ENCODE measurements at regions of chr2 and their contacts with region 1.

Region 1: DNA sequence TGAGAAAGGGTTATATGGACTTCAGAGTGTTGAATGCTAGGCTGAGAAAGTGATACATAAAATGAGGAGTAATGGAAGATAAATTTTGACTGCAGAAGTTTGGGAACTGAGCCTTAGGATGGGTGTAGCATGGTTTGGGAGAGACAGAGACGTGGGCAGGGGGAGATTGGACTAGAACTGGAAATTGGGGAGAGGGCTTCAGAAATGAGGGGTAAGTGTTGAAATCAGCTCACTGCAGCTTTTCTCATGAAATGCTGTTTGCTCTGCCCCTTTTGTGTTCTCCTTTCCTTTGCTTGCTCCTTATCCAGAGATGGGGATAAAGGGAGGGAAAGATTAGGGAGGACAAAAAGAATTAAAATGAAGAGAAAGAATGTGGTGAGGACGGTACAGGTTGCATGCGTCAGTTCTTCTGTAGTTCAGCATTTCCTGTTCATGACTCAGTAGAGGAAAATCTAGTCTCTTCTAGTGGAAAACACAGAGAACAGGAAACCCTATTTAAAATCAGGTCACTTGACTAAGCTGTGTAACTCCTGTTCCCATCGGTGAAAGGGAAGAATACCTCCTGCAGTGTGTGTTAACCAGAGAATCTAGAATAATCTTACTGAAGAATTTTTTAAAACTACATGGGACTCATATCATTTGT is 105.6 kb downstream of the CRIM1 start:
- DNase-seq: no peak
- H3K4me3 ChIP-seq: peak overlapping the region in 1 of 4 experiments; percentile 17; a peak in 1 of 8 replicates
- H3K27ac ChIP-seq: peak overlapping the region; percentile 74
- H3K4me1 ChIP-seq: peaks cover 11 to 44% (median 34%) of the 10 kb centered on the region in 4 experiments
- H3K27me3 ChIP-seq: no peaks in the 10 kb centered on the region
- CTCF ChIP-seq: no peak
- EP300 ChIP-seq: 0 out of 3 replicates have a peak, but pooled peaks of 1 of the 2 experiments have one; percentile 27
- POLR2A ChIP-seq: peak in 1 of 2 experiments; percentile 54; a peak in 1 of 3 replicates
- RAD21 ChIP-seq: no peak

Region 2: DNA sequence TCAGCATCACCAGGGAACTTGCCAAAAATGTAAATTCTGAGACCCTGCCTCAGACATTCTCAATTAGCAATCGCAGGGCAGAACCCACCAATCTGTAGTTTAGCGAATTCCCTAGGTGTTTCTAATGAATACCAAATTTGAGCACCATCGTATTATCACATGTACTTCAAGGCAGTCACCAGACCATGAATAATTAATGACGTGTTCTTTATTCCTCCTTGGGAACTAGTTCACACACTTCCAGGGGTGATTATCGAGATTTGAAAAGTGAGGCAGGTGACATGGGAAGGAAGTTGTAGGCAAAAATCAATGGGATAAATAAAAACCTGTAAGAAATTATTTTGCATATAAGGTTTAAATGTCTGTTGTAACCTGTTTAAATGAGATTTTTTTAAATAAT is 208.1 kb before region 1 on chr2:
- CTCF ChIA-PET with region 1: no interaction called
- POLR2A ChIA-PET with region 1: no interaction called
- DNase-seq: no peak
- H3K4me3 ChIP-seq: no peak overlapping the region
- H3K27ac ChIP-seq: no peak overlapping the region
- H3K4me1 ChIP-seq: peaks cover 0 to 2% (median 0%) of the 10 kb centered on the region in 4 experiments; a peak in 1 of 7 replicates
- H3K27me3 ChIP-seq: no peaks in the 10 kb centered on the region
- CTCF ChIP-seq: no peak
- EP300 ChIP-seq: no peak
- POLR2A ChIP-seq: no peak
- RAD21 ChIP-seq: no peak

Region 3: DNA sequence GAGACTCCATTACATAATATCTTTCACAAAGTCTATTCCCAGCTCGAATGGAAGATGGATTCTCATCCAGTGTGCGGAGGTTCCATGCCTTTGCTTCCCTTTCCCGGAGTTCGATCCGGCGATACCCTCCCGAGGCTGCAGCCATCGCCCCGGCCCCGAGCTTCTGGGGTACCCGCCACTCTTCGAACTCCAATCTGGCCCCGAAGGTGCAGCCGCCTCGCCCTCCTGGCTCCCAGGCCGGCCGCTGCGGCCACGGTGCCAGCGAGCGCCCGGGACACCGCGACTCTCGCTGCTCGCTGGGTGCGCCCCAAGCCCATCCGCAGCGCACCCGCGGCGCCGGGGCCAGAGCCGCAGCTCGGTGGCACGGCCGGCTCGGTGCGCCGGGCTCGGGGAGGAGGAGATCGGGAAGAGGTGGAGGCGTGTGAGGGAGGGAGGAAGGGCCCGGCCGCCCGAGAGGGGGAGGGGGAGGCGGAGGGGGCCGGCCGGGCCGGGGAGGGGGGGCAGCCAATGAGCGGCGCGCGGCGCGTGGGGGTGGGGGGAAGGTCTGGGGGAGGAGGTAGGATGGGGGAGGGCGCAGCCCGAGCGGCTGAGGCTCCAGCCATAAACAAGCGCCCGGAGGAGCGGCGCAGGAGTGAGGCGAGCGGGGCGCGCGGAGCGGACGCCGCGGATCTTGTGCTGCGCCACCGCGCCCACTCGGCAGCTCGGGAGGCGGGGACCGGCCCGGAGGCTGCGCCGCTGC is 105.8 kb before region 1 on chr2 and contains the start of gene CRIM1:
- CTCF ChIA-PET with region 1: interaction called, 99 read pairs
- POLR2A ChIA-PET with region 1: interaction called, 10 read pairs
- DNase-seq: peak; percentile 67 to 84
- H3K4me3 ChIP-seq: peak within 1 kb of the TSS; percentile 80 to 93 (median 84)
- H3K27ac ChIP-seq: peak within 1 kb of the TSS; percentile 53; the same call in 1 of the 2 replicates
- H3K4me1 ChIP-seq: peaks cover 3 to 18% (median 16%) of the 10 kb centered on the region in 4 experiments; a peak in 4 of 7 replicates
- H3K27me3 ChIP-seq: peaks cover 0 to 6% (median 0%) of the 10 kb centered on the region in 4 experiments; a peak in 2 of 7 replicates
- CTCF ChIP-seq: no peak
- EP300 ChIP-seq: no peak
- POLR2A ChIP-seq: peak; percentile 72 to 85
- RAD21 ChIP-seq: no peak
- total RNA-seq, gene CRIM1: 27.4 and 28.4 TPM in 2 replicates

Region 4: DNA sequence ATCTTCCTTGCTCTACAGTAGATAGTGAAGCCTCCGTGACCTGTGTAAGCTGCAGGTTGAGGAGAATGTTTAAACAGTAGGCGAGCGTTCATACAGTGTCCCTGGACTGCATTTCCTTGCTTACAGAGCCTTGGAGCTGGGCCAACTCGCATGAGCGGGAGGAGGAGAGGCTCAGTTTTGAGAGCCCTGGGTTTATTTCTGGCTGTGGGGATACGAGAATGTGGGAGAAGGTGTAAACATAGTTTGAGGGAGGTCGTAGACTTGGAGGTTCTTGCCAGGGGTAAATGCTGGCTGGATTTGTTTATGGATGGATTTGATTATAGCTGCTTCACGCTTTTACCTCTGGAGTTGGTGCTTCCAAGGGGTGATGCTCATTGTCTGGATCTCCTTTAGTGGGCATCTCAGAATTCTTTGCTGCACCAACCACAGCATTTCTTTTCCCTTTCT is 84.8 kb before region 1 on chr2:
- CTCF ChIA-PET with region 1: interaction called, 14 read pairs
- POLR2A ChIA-PET with region 1: interaction called, 3 read pairs
- DNase-seq: no peak
- H3K4me3 ChIP-seq: peak overlapping the region in 2 of 4 experiments; percentile 11 to 14; a peak in 5 of 8 replicates
- H3K27ac ChIP-seq: no peak overlapping the region
- H3K4me1 ChIP-seq: peaks cover 7 to 37% (median 35%) of the 10 kb centered on the region in 4 experiments
- H3K27me3 ChIP-seq: no peaks in the 10 kb centered on the region
- CTCF ChIP-seq: no peak
- EP300 ChIP-seq: no peak
- POLR2A ChIP-seq: no peak
- RAD21 ChIP-seq: no peak

Region 5: GRCh38 chr2:36433311-36434217 is 27.6 kb before region 1 on chr2:
- CTCF ChIA-PET with region 1: interaction called, 20 read pairs
- POLR2A ChIA-PET with region 1: interaction called, 3 read pairs
- DNase-seq: no peak
- H3K4me3 ChIP-seq: no peak overlapping the region
- H3K27ac ChIP-seq: no peak overlapping the region
- H3K4me1 ChIP-seq: peaks cover 3 to 13% (median 6%) of the 10 kb centered on the region in 4 experiments; a peak in 4 of 7 replicates
- H3K27me3 ChIP-seq: no peaks in the 10 kb centered on the region
- CTCF ChIP-seq: no peak
- EP300 ChIP-seq: no peak
- POLR2A ChIP-seq: no peak
- RAD21 ChIP-seq: no peak

Region 6: DNA sequence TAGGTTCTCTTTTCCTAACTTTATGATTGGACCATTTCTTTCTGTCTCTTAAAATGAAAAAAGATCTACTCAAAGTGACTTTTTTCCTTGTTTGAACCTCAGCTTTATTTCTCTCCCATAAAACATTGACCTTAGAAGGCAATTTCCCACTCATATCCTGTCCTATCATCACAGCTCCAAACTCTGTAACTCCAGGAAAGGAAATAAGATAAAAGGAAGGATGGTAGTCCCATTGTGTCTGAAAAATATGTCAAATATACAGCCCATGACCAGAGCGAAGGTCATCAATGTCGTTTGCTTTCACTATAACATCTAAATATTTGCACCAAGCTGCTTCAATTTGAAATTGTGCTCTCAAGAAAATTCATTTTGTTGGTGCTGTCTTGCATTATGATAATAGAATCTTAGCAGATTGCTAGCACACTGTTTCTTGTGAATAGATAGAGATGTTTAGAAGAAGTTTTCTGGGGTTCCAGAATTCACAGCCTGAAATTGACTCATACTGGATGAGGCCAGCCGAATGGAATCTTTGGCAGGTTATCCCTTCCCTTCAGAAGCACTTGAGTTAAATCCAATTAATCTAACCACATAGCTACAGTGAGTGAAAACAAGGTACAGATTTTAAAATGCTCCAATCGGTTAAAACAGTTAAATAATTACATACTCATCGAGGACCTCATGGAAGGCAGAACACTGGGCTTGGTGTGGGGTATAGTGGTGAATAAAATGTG is 10.5 kb before region 1 on chr2:
- CTCF ChIA-PET with region 1: interaction called, 26 read pairs
- POLR2A ChIA-PET with region 1: interaction called, 3 read pairs
- DNase-seq: no peak
- H3K4me3 ChIP-seq: no peak overlapping the region
- H3K27ac ChIP-seq: no peak overlapping the region
- H3K4me1 ChIP-seq: peaks cover 0 to 7% (median 3%) of the 10 kb centered on the region in 4 experiments; a peak in 2 of 7 replicates
- H3K27me3 ChIP-seq: no peaks in the 10 kb centered on the region
- CTCF ChIP-seq: no peak
- EP300 ChIP-seq: no peak
- POLR2A ChIP-seq: no peak
- RAD21 ChIP-seq: no peak

Region 7: DNA sequence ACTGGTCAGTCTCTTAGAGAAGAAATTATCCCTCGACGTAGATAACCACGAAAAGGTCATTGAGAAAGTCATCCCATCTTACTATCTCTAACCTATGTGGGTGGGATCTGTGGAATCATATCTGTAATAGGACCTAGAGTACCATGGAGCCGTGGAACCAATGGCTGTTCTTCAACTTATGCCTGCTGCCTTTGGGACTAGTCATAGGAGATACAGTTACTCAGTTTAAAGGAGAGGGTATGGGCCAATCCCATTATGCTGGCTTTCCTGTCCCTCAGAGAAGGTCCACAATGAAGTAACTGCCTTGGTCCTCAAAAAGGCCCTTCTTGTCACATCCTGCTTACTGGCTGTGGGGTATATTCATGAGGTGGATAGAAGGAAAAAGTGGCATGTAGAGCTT is 59.3 kb after region 1 on chr2:
- CTCF ChIA-PET with region 1: no interaction called
- POLR2A ChIA-PET with region 1: no interaction called
- DNase-seq: no peak
- H3K4me3 ChIP-seq: no peak overlapping the region
- H3K27ac ChIP-seq: no peak overlapping the region
- H3K4me1 ChIP-seq: no peaks in the 10 kb centered on the region
- H3K27me3 ChIP-seq: no peaks in the 10 kb centered on the region
- CTCF ChIP-seq: no peak
- EP300 ChIP-seq: no peak
- POLR2A ChIP-seq: no peak
- RAD21 ChIP-seq: no peak